SK-N-SH (cell line): ENCODE measurements at regions of chr10 and their contacts with region 1.

Region 1: GRCh38 chr10:102394079-102394800 is 1.3 kb upstream of the NFKB2 start:
- DNase-seq: peak; percentile 92
- H3K4me3 ChIP-seq: peak overlapping the region; percentile 65 to 77
- H3K27ac ChIP-seq: peak overlapping the region; percentile 47 to 81; a peak in 3 of 4 replicates
- H3K4me1 ChIP-seq: peaks cover 0 to 17% of the 10 kb centered on the region in 2 experiments; a peak in 1 of 4 replicates
- H3K27me3 ChIP-seq: no peaks in the 10 kb centered on the region
- CTCF ChIP-seq: no peak; the same call in 1 of the 2 replicates
- EP300 ChIP-seq: no peak
- RAD21 ChIP-seq: no peak

Region 2: GRCh38 chr10:102375250-102375649 is 19.0 kb before region 1 on chr10:
- CTCF ChIA-PET with region 1: interaction called, 77 read pairs
- POLR2A ChIA-PET with region 1: no interaction called
- DNase-seq: no peak
- H3K4me3 ChIP-seq: no peak overlapping the region
- H3K27ac ChIP-seq: no peak overlapping the region
- H3K4me1 ChIP-seq: no peaks in the 10 kb centered on the region
- H3K27me3 ChIP-seq: no peaks in the 10 kb centered on the region
- CTCF ChIP-seq: no peak
- EP300 ChIP-seq: no peak
- RAD21 ChIP-seq: 0 out of 2 replicates have a peak, but pooled peaks have one; percentile 13

Region 3: GRCh38 chr10:102384053-102384452 is 10.2 kb before region 1 on chr10:
- CTCF ChIA-PET with region 1: interaction called, 77 read pairs
- POLR2A ChIA-PET with region 1: no interaction called
- DNase-seq: no peak
- H3K4me3 ChIP-seq: no peak overlapping the region
- H3K27ac ChIP-seq: no peak overlapping the region
- H3K4me1 ChIP-seq: no peaks in the 10 kb centered on the region; a peak in 1 of 4 replicates
- H3K27me3 ChIP-seq: no peaks in the 10 kb centered on the region
- CTCF ChIP-seq: peak; percentile 18; the same call in 1 of the 2 replicates
- EP300 ChIP-seq: no peak
- RAD21 ChIP-seq: no peak

Region 4: DNA sequence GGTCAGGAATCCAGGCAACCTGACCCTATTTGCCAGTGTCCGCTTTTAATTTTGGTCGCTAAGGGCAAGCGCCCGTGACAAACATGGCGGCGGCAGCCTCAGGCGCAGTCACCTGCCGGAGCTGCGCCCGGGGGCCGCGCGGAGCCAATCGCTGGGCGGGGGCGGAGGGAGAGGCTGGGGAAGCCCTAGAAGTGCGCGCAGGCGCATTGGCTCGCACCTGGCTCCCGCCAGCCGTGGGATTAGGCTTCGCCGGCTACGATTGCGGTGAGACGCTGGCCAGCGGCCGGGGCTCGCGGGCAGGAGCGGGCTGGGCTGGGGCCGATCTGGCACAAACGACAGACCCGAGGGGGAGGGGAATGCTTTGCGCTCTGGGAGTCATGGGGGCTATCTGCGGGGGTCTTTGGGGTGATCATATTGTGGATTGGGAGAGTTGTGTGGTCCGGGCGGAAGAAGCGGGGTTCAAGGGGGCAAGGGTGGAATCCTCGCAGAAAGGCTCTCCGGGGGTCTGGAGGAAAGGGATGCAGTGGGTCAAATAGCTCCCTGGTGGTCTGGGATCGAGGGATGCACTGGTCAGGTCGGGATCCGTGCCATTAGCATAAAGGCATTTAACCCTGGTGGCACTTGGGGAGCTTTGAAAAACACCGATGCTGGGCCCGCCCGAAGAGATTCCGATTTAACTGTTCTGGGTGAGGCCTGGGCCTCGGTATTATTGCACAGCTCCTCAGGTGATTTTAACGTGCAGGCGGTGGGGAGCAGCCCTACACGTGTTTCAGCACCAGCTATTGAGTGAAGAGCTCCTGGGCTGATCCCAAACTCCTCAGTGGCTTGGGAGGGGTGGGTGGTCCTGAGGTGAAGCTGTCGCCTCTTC is 67.2 kb after region 1 on chr10:
- CTCF ChIA-PET with region 1: interaction called, 16 read pairs
- POLR2A ChIA-PET with region 1: no interaction called
- DNase-seq: peak; percentile 99
- H3K4me3 ChIP-seq: peak overlapping the region; percentile 55 to 74
- H3K27ac ChIP-seq: peak overlapping the region in 1 of 2 experiments; percentile 58; a peak in 1 of 4 replicates
- H3K4me1 ChIP-seq: peaks cover 0 to 10% of the 10 kb centered on the region in 2 experiments; a peak in 1 of 4 replicates
- H3K27me3 ChIP-seq: no peaks in the 10 kb centered on the region
- CTCF ChIP-seq: no peak
- EP300 ChIP-seq: no peak
- RAD21 ChIP-seq: no peak